ENCODE measurements at regions of chr17 and their contacts with region 1.

Region 1: DNA sequence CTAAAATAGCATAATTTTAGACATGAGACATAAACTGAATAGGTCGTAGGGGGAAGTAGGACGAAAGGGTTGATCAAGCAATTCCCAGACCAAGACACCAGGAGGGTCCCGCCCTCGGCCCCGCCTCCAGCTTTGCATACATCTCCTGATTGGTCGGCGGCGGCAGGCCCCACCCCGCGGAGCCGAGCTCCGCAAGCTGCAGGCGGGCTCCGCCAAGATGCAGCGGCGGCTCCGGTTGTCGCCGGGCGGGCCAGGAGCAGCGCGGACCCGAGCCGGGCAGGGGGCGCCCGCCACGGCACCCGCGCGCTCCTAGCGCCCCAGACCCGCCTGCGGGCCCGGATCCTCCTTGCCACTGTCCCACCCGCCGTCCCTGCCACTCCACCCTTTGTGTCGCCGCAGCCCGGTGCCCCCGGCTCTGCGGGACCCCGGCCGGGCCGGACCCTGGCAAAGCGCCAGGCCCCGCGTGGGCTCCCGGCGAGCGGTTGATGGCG is at the start of gene CDR2L:
- DNase-seq: peak; percentile 98 to 99
- ATAC-seq: peak; percentile 93
- H3K4me3 ChIP-seq: peak within 1 kb of the TSS; percentile 58 to 80
- H3K27ac ChIP-seq: peak within 1 kb of the TSS; percentile 76 to 89
- H3K4me1 ChIP-seq: no peaks in the 10 kb centered on the region
- H3K27me3 ChIP-seq: no peaks in the 10 kb centered on the region
- total RNA-seq, gene CDR2L: 20.2 to 23.6 TPM

Region 2: GRCh38 chr17:75012346-75013091 is 25.1 kb after region 1 on chr17 and contains the start of gene MRPL58:
- intact Hi-C with region 1: loop called in 1 of 2 experiments (anchors 2 kb)
- DNase-seq: peak; percentile 88 to 94
- ATAC-seq: peak; percentile 98
- H3K4me3 ChIP-seq: peak within 1 kb of the TSS; percentile 22 to 85
- H3K27ac ChIP-seq: peak within 1 kb of the TSS in 1 of 2 donors; percentile 71
- H3K4me1 ChIP-seq: peaks cover 0 to 4% of the 10 kb centered on the region in 2 donors
- H3K27me3 ChIP-seq: no peaks in the 10 kb centered on the region
- total RNA-seq, gene MRPL58: 16.6 to 17.4 TPM

Region 3: GRCh38 chr17:75034236-75034908 is 46.9 kb after region 1 on chr17:
- intact Hi-C with region 1: loop called (anchors 2 to 5 kb)
- DNase-seq: peak; percentile 88 to 95
- ATAC-seq: peak; percentile 91
- H3K4me3 ChIP-seq: peak overlapping the region; percentile 37 to 55
- H3K27ac ChIP-seq: peak overlapping the region; percentile 10 to 84
- H3K4me1 ChIP-seq: no peaks in the 10 kb centered on the region
- H3K27me3 ChIP-seq: no peaks in the 10 kb centered on the region

Measured in aorta (tissue), 5 donors.